CD8-positive, alpha-beta memory T cell (primary cell): ENCODE measurements at regions of chr10 and their contacts with region 1.

Region 1: GRCh38 chr10:78009662-78010061 is 19.7 kb downstream of the POLR3A start:
- DNase-seq: no peak
- H3K4me3 ChIP-seq: no peak overlapping the region
- H3K4me3 Mint-ChIP-seq: no peak overlapping the region
- H3K27ac ChIP-seq: no peak overlapping the region
- H3K27ac Mint-ChIP-seq: peak overlapping the region in 2 of 8 donors; percentile 9 to 84
- H3K4me1 ChIP-seq: no peaks in the 10 kb centered on the region
- H3K4me1 Mint-ChIP-seq: peaks cover 0 to 4% (median 0%) of the 10 kb centered on the region in 3 donors
- H3K27me3 ChIP-seq: no peaks in the 10 kb centered on the region
- H3K27me3 Mint-ChIP-seq: no peaks in the 10 kb centered on the region

Region 2: DNA sequence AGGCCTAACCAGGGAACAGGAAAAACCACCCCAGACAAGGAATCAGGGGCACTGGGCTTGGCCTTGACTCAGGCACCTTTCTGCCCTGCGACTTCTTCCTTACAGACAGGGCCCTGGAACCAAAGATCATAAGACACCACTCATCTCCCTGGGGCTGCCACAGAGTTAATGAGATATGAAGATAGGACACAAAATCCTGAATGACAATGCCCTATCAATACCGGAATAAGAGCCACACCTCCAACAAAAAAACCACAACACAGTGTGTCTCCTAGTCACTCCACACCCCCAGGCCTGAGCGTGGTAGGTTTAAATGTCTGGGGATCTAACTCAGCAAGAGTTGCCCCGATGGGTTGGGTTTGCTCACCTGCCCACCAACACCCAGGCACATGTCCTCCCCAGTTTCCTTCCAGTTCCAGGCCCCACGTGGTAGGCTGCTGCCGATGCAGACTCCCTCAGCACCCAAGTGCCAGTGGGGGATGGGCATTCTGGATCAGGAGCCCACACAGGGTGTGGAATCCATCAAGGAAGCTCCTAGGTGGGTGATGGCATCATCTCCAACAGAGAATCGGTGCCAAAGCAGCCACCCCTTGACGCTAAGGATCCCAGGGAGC is 87.0 kb before region 1 on chr10:
- CTCF ChIA-PET with region 1: no interaction called
- POLR2A ChIA-PET with region 1: interaction called, 15 read pairs
- DNase-seq: no peak
- H3K4me3 ChIP-seq: no peak overlapping the region
- H3K4me3 Mint-ChIP-seq: no peak overlapping the region
- H3K27ac ChIP-seq: no peak overlapping the region
- H3K27ac Mint-ChIP-seq: no peak overlapping the region
- H3K4me1 ChIP-seq: no peaks in the 10 kb centered on the region
- H3K4me1 Mint-ChIP-seq: peaks cover 12 to 14% (median 13%) of the 10 kb centered on the region in 3 donors
- H3K27me3 ChIP-seq: peaks cover 7% of the 10 kb centered on the region
- H3K27me3 Mint-ChIP-seq: peaks cover 9 to 37% of the 10 kb centered on the region in 2 donors